Tibial artery (tissue), 4 donors: ENCODE measurements at regions of chrX and their contacts with region 1.

Region 1: GRCh38 chrX:37543324-37543723 is 28.1 kb upstream of the LANCL3 start:
- DNase-seq: no peak
- H3K4me3 ChIP-seq: no peak overlapping the region
- H3K27ac ChIP-seq: no peak overlapping the region
- H3K4me1 ChIP-seq: no peaks in the 10 kb centered on the region
- H3K27me3 ChIP-seq: no peaks in the 10 kb centered on the region
- CTCF ChIP-seq: no peak

Region 2: DNA sequence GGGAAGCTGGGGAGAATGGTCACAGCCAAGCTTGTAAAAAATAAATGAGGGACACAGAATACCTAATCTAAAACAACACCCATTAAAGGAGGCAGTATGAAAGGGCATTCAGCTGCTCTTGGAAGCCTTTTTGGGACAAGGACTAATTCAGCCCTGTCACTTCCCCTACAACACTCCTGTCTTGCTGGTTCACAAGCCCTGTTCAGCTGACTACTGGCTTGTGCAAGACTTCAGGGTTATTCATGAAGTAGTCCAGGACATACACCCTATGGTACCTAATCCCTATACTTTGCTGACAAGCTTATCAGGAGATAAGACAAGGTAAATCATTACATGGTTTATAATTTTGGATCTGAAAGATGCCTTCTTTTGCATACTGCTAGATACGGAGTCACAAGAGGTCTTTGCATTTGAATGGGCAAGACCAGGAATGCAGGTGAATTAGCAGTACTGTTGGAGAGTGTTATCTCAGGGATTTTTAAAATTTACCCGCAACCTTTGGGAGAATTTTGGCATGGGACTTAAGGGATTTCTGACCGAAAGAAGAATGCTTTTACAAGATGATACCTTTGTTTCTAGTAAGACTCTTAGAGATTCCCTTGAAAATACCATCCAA is 75.1 kb before region 1 on chrX:
- intact Hi-C with region 1: no loop called
- DNase-seq: no peak
- H3K4me3 ChIP-seq: no peak overlapping the region
- H3K27ac ChIP-seq: no peak overlapping the region
- H3K4me1 ChIP-seq: no peaks in the 10 kb centered on the region
- H3K27me3 ChIP-seq: no peaks in the 10 kb centered on the region
- CTCF ChIP-seq: no peak

Region 3: DNA sequence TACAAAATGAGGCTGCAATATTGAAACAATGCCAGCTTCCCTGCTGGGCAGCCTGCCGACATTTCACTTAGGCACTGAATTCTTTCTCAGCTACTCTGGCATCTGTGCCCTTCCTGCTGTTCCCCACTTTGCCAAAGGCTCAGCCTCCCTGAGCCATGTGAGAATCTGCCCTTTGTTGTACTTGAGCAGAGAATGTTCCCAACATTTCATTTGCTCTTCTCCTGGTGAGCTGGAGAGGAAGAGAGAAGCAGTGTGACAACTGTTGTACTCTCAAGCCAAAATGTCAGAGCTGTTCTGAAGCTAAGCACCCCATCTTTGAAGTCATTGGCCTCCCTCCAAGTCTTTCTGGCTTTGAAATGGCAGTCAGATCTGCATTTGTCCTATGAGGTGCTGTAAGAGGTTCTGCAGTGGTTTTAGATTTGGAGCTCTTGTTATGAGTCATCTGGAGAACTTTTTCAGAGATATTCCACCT is 60.6 kb after region 1 on chrX:
- intact Hi-C with region 1: loop called (anchors 10 kb)
- DNase-seq: no peak
- H3K4me3 ChIP-seq: no peak overlapping the region
- H3K27ac ChIP-seq: no peak overlapping the region
- H3K4me1 ChIP-seq: peaks cover 0 to 8% (median 0%) of the 10 kb centered on the region in 4 donors
- H3K27me3 ChIP-seq: no peaks in the 10 kb centered on the region
- CTCF ChIP-seq: no peak